Activated T-helper 1 cell treated with anti-CD3 and anti-CD28 coated beads, Interleukin-12 subunit alpha, Interleukin-12 subunit beta, Interleukin-2, Interleukin-4 antibody, amounts not matched to agents 30 ng/mL and 10 ng/mL and 1 ng/mL, durations not matched to agents 14 hours and 24 hours and 36 hours (primary cell): ENCODE measurements at regions of chr16 and their contacts with region 1.

Region 1: GRCh38 chr16:82229796-82230619 is 60.0 kb upstream of the MPHOSPH6 start:
- DNase-seq: peak; percentile 29
- H3K4me3 Mint-ChIP-seq: no peak overlapping the region
- H3K27ac Mint-ChIP-seq: no peak overlapping the region
- H3K4me1 Mint-ChIP-seq: no peaks in the 10 kb centered on the region
- H3K27me3 Mint-ChIP-seq: peaks cover 14% of the 10 kb centered on the region

Region 2: GRCh38 chr16:81885976-81886586 is 343.9 kb before region 1 on chr16:
- intact Hi-C with region 1: loop called (anchors 1 kb)
- DNase-seq: peak; percentile 3
- H3K4me3 Mint-ChIP-seq: no peak overlapping the region
- H3K27ac Mint-ChIP-seq: no peak overlapping the region
- H3K4me1 Mint-ChIP-seq: no peaks in the 10 kb centered on the region
- H3K27me3 Mint-ChIP-seq: no peaks in the 10 kb centered on the region

Region 3: DNA sequence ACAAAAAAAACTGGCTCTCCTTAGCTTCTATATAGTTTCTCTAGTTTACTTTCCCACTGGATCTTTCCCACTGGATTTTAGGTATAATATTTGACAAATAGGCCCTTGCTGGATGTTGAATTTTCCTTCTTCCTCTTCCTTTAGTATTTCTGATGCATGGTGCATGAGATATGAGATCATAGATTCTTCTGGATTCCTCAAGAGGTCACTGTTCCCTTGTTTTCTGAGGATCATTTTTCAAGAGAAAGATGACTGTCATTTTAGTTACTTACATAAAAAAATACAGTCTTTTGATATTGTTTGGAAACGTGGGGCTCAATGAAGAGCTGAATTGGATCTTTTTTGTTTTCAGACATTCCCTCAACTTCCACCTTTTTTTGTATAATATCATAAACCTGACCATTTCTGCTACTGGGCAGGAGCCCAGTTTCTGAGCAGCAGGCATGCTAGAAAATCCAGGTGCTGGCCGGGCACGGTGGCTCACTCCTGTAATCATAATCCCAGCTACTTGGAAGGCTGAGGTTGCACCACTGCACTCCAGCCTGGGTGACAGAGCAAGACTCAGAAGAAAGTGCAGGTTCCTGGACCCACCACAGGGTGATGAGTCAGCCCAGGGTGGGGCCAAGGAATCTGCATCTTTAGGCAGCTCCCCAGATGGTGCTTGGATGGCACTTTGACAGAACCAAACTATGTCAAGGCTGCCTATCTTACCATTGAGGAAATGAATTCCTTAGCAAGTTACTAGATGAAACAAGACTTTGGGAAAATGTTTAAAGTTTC is 289.0 kb before region 1 on chr16:
- intact Hi-C with region 1: loop called (anchors 1 kb)
- DNase-seq: no peak
- H3K4me3 Mint-ChIP-seq: no peak overlapping the region
- H3K27ac Mint-ChIP-seq: no peak overlapping the region
- H3K4me1 Mint-ChIP-seq: no peaks in the 10 kb centered on the region
- H3K27me3 Mint-ChIP-seq: no peaks in the 10 kb centered on the region

Region 4: GRCh38 chr16:81994485-81994884 is 235.5 kb before region 1 on chr16:
- intact Hi-C with region 1: loop called (anchors 1 kb)
- DNase-seq: no peak
- H3K4me3 Mint-ChIP-seq: no peak overlapping the region
- H3K27ac Mint-ChIP-seq: no peak overlapping the region
- H3K4me1 Mint-ChIP-seq: no peaks in the 10 kb centered on the region
- H3K27me3 Mint-ChIP-seq: no peaks in the 10 kb centered on the region

Region 5: DNA sequence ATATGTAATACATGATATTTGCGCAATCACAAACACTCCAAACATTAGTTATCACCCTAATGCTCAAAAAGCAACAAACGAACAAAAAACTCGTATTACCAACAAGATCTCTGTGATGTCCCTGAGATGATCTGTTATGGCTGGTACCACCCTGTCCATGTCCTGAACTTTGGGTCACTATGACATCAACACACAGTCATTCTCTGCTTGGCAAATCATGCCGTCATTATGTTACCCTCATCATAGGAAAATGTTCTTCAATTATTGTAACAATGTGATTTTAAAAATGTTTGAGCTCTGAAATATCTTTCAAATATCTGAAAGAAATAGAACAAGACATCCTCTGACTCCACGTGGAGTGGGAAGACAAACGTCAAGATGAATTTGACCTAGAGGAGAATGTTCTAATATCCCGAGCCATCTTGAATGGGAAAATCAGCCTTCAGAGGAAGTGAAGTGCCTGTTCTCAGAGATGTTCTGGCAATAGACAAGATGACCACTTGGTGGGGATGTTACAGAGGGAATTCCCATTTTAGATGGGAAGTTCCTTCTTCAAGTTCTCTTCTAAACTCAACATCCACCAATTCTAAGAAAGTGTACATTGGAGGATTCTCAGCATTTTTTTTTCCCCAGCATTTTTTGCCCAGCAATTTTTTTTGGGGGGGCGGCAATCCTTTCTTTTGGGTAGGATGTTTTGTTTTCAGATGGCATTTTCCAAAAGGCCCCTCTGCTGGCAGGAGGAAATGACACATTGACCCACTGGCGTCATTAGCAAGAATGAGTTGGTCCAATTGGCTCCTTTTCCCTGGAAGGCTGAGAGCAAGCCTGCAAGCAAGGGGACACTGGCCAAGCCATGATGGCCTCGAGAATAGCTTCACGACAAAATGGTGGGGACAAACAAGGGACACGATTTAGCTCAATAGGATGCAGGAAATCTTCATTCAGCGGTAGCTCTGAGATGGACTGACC is 198.6 kb before region 1 on chr16:
- intact Hi-C with region 1: loop called (anchors 1 kb)
- DNase-seq: no peak
- H3K4me3 Mint-ChIP-seq: no peak overlapping the region
- H3K27ac Mint-ChIP-seq: no peak overlapping the region
- H3K4me1 Mint-ChIP-seq: no peaks in the 10 kb centered on the region
- H3K27me3 Mint-ChIP-seq: no peaks in the 10 kb centered on the region

Region 6: DNA sequence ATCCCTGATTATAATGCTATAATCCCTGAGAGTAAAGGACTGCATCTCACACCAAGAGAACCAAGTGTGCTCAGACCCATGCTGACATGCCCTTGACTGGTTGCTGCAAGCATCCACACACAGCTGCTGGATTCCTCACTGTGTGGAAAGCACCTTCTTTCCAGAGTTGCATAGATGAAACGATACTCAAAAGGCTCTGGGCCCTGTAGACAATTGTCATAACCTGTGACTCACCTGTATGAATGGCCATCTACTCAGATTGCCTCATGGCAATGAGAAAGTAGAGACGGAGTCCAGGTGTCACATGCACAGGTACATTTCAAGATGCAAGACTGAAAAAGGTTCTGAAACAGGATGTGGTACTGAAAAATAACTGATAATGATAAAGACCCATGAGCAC is 118.1 kb before region 1 on chr16:
- intact Hi-C with region 1: no loop called
- DNase-seq: no peak
- H3K4me3 Mint-ChIP-seq: no peak overlapping the region
- H3K27ac Mint-ChIP-seq: no peak overlapping the region
- H3K4me1 Mint-ChIP-seq: no peaks in the 10 kb centered on the region
- H3K27me3 Mint-ChIP-seq: no peaks in the 10 kb centered on the region